ENCODE measurements at regions of chr14 and their contacts with region 1.

Region 1: DNA sequence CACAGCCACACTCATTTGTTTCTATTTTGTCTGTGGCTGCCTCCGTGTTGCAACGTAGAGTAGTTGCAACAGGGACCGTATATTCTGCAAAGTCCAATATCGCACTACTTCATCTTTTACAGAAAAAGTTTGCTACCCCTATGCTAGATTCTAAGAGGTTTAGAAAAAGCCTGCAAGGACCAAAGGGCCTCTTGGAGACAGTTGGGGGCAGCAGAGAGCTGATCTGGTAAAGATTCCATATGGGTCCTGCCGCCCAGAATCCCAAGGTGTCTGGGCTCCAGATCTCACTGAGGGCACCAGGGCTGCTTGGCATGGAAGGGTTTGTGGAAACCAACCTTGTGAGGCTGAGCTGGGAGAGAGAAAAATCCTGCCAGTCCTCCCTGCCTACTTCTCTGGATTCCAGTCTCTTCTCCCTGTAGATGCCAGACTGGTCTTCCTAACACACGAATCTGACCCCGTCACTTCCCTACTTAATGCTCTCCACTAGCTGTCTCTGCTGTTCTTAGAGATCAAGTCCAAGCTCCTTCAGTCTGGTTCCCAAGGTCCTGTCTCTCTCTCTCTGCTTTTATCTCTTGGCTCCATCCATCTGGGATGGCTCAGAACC is 74.6 kb downstream of the GLRX5 start:
- DNase-seq: peak; percentile 47
- CTCF ChIP-seq: peak; percentile 72

Region 2: DNA sequence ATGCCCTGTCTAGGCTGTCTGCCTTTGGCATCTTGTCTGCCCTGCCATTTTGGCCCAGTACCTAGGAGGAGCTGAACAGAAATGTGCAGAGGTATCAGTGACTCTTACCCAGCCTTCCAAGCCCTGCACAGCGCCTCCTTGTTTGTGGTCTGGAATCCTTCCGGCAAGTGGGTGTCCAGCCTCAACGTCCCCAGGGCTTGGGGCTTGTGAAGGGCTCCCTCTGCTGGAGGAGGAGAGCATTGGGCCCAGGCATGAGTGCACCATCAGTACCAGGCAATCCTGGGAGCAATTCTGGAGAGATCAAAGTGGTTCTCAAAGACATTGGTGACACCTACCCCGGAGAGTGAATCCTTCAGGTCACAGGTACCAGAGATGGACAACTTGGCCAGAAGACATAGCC is 74.3 kb after region 1 on chr14:
- in situ Hi-C with region 1: loop called (anchors 10 kb)
- DNase-seq: peak; percentile 77
- CTCF ChIP-seq: peak; percentile 93

Region 3: GRCh38 chr14:95981965-95982719 is 372.7 kb after region 1 on chr14:
- in situ Hi-C with region 1: no loop called
- DNase-seq: no peak
- CTCF ChIP-seq: no peak